ENCODE measurements at regions of chr10 and their contacts with region 1.

Region 1: GRCh38 chr10:100551196-100551595 is 15.5 kb downstream of the HIF1AN start:
- DNase-seq: no peak
- H3K4me3 ChIP-seq: no peak overlapping the region
- H3K4me3 Mint-ChIP-seq: no peak overlapping the region
- H3K27ac Mint-ChIP-seq: no peak overlapping the region
- H3K4me1 ChIP-seq: peaks cover 17% of the 10 kb centered on the region
- H3K4me1 Mint-ChIP-seq: peaks cover 18% of the 10 kb centered on the region
- H3K27me3 ChIP-seq: no peaks in the 10 kb centered on the region
- H3K27me3 Mint-ChIP-seq: no peaks in the 10 kb centered on the region
- CTCF ChIP-seq: no peak

Region 2: GRCh38 chr10:100535715-100536353 is 15.4 kb before region 1 on chr10 and contains the start of gene HIF1AN:
- CTCF ChIA-PET with region 1: interaction called, 14 read pairs
- POLR2A ChIA-PET with region 1: interaction called, 13 read pairs
- intact Hi-C with region 1: no loop called
- DNase-seq: peak; percentile 93 to 94
- H3K4me3 ChIP-seq: peak within 1 kb of the TSS; percentile 62
- H3K4me3 Mint-ChIP-seq: peak within 1 kb of the TSS; percentile 29
- H3K27ac Mint-ChIP-seq: no peak within 1 kb of the TSS
- H3K4me1 ChIP-seq: no peaks in the 10 kb centered on the region; the same call in 1 of the 2 replicates
- H3K4me1 Mint-ChIP-seq: no peaks in the 10 kb centered on the region
- H3K27me3 ChIP-seq: no peaks in the 10 kb centered on the region
- H3K27me3 Mint-ChIP-seq: no peaks in the 10 kb centered on the region
- CTCF ChIP-seq: peak; percentile 85 to 97
- total RNA-seq, gene HIF1AN: 71.2 and 72.5 TPM in 2 replicates

Region 3: DNA sequence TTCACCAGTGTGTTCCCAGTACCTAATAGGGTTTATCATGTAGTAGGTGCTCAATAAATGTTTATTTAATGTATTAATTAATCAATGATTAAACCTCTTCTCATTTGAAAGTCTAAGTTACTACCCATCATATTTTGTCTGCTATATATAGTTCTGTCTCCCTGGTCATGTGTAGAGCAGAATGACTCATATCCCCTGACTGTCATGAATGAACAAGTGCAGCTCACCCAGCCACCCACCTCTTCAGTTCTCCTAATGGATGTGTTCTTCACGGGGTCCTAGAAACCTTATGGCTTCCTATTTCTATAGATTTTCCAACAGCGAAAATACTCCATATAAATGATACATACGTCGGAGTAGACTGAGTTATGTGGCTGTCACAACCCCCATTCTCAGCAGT is 49.0 kb after region 1 on chr10:
- CTCF ChIA-PET with region 1: interaction called, 11 read pairs
- POLR2A ChIA-PET with region 1: no interaction called
- intact Hi-C with region 1: no loop called
- DNase-seq: no peak
- H3K4me3 ChIP-seq: no peak overlapping the region
- H3K4me3 Mint-ChIP-seq: no peak overlapping the region
- H3K27ac Mint-ChIP-seq: no peak overlapping the region
- H3K4me1 ChIP-seq: peaks cover 5% of the 10 kb centered on the region
- H3K4me1 Mint-ChIP-seq: no peaks in the 10 kb centered on the region
- H3K27me3 ChIP-seq: no peaks in the 10 kb centered on the region
- H3K27me3 Mint-ChIP-seq: peaks cover 1% of the 10 kb centered on the region
- CTCF ChIP-seq: no peak

Region 4: DNA sequence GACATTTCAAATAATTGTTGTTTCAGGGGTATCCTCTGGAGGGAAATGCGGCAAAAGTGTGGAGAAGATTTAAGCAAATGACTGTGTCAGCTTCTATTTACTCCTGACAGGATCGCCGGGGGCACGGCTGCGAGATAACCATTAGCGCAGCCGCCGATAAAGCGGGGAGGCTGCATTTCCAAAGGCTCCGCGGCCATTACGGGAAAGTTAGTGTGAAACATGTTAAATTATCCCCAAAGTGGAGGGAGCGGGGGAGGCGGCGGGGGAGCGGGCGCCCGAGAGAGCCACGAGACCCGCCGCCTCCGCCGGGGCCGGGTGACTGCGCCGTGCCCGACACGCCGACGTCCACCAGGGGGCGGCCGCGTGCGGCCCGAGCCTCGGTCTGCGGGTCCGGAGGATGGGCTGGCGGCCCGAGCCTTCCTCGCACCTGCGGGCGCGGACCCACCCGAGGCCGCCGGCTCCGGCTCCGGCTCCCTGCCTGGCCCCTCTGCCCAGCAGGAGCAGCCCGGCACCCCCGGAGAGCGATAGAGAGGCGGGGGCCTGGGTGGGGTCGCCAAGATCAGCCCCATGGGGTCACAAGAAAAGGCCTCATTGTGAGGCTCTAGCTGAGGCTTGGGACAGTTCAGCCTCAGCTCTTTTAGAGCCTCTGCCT is 119.8 kb after region 1 on chr10:
- CTCF ChIA-PET with region 1: no interaction called
- POLR2A ChIA-PET with region 1: no interaction called
- intact Hi-C with region 1: no loop called
- DNase-seq: peak in 1 of 2 experiments; percentile 77
- H3K4me3 ChIP-seq: peak overlapping the region; percentile 24
- H3K4me3 Mint-ChIP-seq: peak overlapping the region; percentile 54
- H3K27ac Mint-ChIP-seq: no peak overlapping the region
- H3K4me1 ChIP-seq: 0 out of 2 replicates have a peak, but pooled peaks cover 8% of the 10 kb centered on the region
- H3K4me1 Mint-ChIP-seq: no peaks in the 10 kb centered on the region
- H3K27me3 ChIP-seq: no peaks in the 10 kb centered on the region; the same call in 1 of the 2 replicates
- H3K27me3 Mint-ChIP-seq: peaks cover 29% of the 10 kb centered on the region
- CTCF ChIP-seq: peak; percentile 51 to 94

Measured in Caco-2 (cell line).